HCT116 (cell line): ENCODE measurements at regions of chr14 and their contacts with region 1.

Region 1: GRCh38 chr14:32576088-32576795 is 247.1 kb downstream of the AKAP6 start:
- DNase-seq: peak; percentile 42
- ATAC-seq: peak; percentile 86
- H3K4me3 ChIP-seq: no peak overlapping the region
- H3K27ac ChIP-seq: no peak overlapping the region
- H3K4me1 ChIP-seq: no peaks in the 10 kb centered on the region
- H3K27me3 ChIP-seq: peaks cover 44% of the 10 kb centered on the region
- CTCF ChIP-seq: peak; percentile 56 to 93 (median 92); a peak in 5 of 6 replicates
- POLR2A ChIP-seq: no peak
- RAD21 ChIP-seq: peak; percentile 81

Region 2: GRCh38 chr14:32531942-32532515 is 44.2 kb before region 1 on chr14:
- CTCF ChIA-PET with region 1: no interaction called
- POLR2A ChIA-PET with region 1: no interaction called
- RAD21 ChIA-PET with region 1: no interaction called
- intact Hi-C with region 1: no loop called
- DNase-seq: no peak
- ATAC-seq: no peak
- H3K4me3 ChIP-seq: no peak overlapping the region
- H3K27ac ChIP-seq: no peak overlapping the region
- H3K4me1 ChIP-seq: no peaks in the 10 kb centered on the region
- H3K27me3 ChIP-seq: no peaks in the 10 kb centered on the region
- CTCF ChIP-seq: no peak
- POLR2A ChIP-seq: no peak
- RAD21 ChIP-seq: no peak

Region 3: GRCh38 chr14:33432407-33433023 is 856.3 kb after region 1 on chr14:
- CTCF ChIA-PET with region 1: no interaction called
- POLR2A ChIA-PET with region 1: no interaction called
- RAD21 ChIA-PET with region 1: no interaction called
- intact Hi-C with region 1: loop called (anchors 2 kb)
- DNase-seq: no peak
- ATAC-seq: no peak; the same call in 1 of the 2 replicates
- H3K4me3 ChIP-seq: no peak overlapping the region
- H3K27ac ChIP-seq: no peak overlapping the region
- H3K4me1 ChIP-seq: no peaks in the 10 kb centered on the region
- H3K27me3 ChIP-seq: no peaks in the 10 kb centered on the region
- CTCF ChIP-seq: peak in 2 of 3 experiments; percentile 21 to 38; a peak in 3 of 6 replicates
- POLR2A ChIP-seq: no peak
- RAD21 ChIP-seq: no peak

Region 4: GRCh38 chr14:33848706-33849454 is 1272.6 kb after region 1 on chr14:
- CTCF ChIA-PET with region 1: no interaction called
- POLR2A ChIA-PET with region 1: no interaction called
- RAD21 ChIA-PET with region 1: no interaction called
- intact Hi-C with region 1: loop called (anchors 5 kb)
- DNase-seq: peak; percentile 82
- ATAC-seq: peak; percentile 99
- H3K4me3 ChIP-seq: no peak overlapping the region
- H3K27ac ChIP-seq: no peak overlapping the region
- H3K4me1 ChIP-seq: peaks cover 0 to 4% of the 10 kb centered on the region in 2 experiments; a peak in 2 of 4 replicates
- H3K27me3 ChIP-seq: no peaks in the 10 kb centered on the region
- CTCF ChIP-seq: peak; percentile 91 to 96 (median 95)
- POLR2A ChIP-seq: no peak
- RAD21 ChIP-seq: peak; percentile 82

Region 5: GRCh38 chr14:34300882-34301734 is 1724.9 kb after region 1 on chr14:
- CTCF ChIA-PET with region 1: no interaction called
- POLR2A ChIA-PET with region 1: no interaction called
- RAD21 ChIA-PET with region 1: no interaction called
- intact Hi-C with region 1: loop called (anchors 1 kb)
- DNase-seq: peak; percentile 28
- ATAC-seq: peak; percentile 75
- H3K4me3 ChIP-seq: no peak overlapping the region
- H3K27ac ChIP-seq: no peak overlapping the region
- H3K4me1 ChIP-seq: peaks cover 9% of the 10 kb centered on the region in 2 experiments
- H3K27me3 ChIP-seq: no peaks in the 10 kb centered on the region
- CTCF ChIP-seq: peak; percentile 34 to 83 (median 70); a peak in 5 of 6 replicates
- POLR2A ChIP-seq: no peak
- RAD21 ChIP-seq: peak; percentile 70